Adrenal gland (tissue), 19 donors: ENCODE measurements at regions of chr3 and their contacts with region 1.

Region 1: GRCh38 chr3:181709537-181710279 is 2.0 kb upstream of the SOX2 start:
- DNase-seq: peak; percentile 43 to 90 (median 79)
- H3K4me3 ChIP-seq: no peak overlapping the region
- H3K27ac ChIP-seq: no peak overlapping the region
- H3K4me1 ChIP-seq: peaks cover 8 to 12% of the 10 kb centered on the region in 2 donors
- H3K27me3 ChIP-seq: peaks cover 100% of the 10 kb centered on the region
- CTCF ChIP-seq: peak; percentile 56 to 94 (median 79)
- POLR2A ChIP-seq: no peak

Region 2: DNA sequence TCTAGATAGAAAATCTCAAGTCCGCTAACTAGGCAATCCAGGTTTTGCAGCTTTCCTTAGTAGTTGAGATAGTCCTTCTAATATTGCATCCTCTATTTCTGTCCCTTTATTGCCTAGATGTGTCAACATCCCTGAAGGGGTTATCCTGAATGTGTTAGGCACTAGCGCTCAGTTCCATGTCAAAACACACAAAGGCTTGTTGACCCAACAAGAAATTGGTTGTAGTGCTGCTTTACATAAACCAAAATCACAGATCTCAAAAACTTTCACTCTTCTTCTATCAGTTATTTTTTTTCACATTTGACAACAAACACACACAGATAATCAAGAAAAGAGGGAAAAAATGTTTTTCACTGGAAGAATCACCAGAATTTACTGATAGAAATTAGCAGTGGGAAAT is 49.4 kb before region 1 on chr3:
- intact Hi-C with region 1: no loop called
- DNase-seq: no peak
- H3K4me3 ChIP-seq: no peak overlapping the region
- H3K27ac ChIP-seq: no peak overlapping the region
- H3K4me1 ChIP-seq: no peaks in the 10 kb centered on the region
- H3K27me3 ChIP-seq: no peaks in the 10 kb centered on the region
- CTCF ChIP-seq: no peak
- POLR2A ChIP-seq: no peak

Region 3: GRCh38 chr3:181941250-181941649 is 231.5 kb after region 1 on chr3:
- intact Hi-C with region 1: no loop called
- DNase-seq: no peak
- H3K4me3 ChIP-seq: no peak overlapping the region
- H3K27ac ChIP-seq: no peak overlapping the region
- H3K4me1 ChIP-seq: no peaks in the 10 kb centered on the region
- H3K27me3 ChIP-seq: no peaks in the 10 kb centered on the region
- CTCF ChIP-seq: no peak
- POLR2A ChIP-seq: no peak

Region 4: GRCh38 chr3:182258538-182259177 is 549.0 kb after region 1 on chr3:
- intact Hi-C with region 1: loop called (anchors 5 to 10 kb)
- DNase-seq: peak in 1 of 7 donors; percentile 7
- H3K4me3 ChIP-seq: no peak overlapping the region
- H3K27ac ChIP-seq: no peak overlapping the region
- H3K4me1 ChIP-seq: no peaks in the 10 kb centered on the region
- H3K27me3 ChIP-seq: peaks cover 4% of the 10 kb centered on the region
- CTCF ChIP-seq: peak; percentile 26 to 65 (median 52)
- POLR2A ChIP-seq: no peak

Region 5: DNA sequence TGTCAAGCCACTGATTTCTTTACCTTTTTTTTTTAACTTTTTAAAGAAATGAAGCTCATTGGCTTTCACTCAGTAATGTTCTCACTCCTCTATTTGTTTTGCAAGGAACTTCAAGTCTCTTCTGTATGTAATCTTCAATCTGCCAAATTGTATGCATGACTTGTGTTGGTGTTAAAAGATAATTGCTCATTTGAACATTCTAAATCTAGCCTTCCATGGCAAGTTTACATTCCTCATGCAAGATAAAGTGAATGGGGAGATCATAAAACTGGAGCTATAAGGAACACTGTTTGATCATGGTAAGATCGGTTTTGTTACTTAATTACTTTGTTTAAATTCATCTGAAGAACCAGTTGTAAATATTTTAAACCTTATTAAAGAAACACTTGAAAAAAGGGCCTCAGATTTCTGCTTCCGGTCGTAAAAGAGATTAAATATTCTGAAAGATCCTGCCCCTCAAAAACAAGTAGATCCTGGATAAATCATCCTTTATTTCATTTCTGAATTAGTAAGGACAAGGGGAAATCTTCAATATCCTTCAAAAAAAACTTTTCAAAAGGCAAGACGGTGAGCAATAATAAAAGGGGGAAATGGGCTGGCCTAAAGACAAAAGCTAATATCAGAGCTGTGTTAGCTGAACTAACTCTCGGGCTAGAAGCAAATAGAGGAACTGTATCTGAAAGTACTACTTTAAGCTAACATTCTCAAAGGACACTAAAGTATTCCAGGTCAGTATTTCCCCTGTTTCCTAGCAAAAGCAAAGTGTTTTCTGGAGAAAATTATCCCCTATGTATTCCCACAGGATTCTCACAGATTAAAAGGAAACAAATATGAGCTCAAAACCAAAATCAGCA is 976.6 kb after region 1 on chr3:
- intact Hi-C with region 1: loop called (anchors 5 kb)
- DNase-seq: no peak
- H3K4me3 ChIP-seq: no peak overlapping the region
- H3K27ac ChIP-seq: no peak overlapping the region
- H3K4me1 ChIP-seq: peaks cover 9 to 16% of the 10 kb centered on the region in 2 donors
- H3K27me3 ChIP-seq: peaks cover 33% of the 10 kb centered on the region
- CTCF ChIP-seq: no peak
- POLR2A ChIP-seq: no peak